ENCODE measurements at regions of chr7 and their contacts with region 1.

Region 1: GRCh38 chr7:75878769-75879611 is at the start of gene RHBDD2:
- DNase-seq: peak; percentile 90
- H3K4me3 Mint-ChIP-seq: peak within 1 kb of the TSS; percentile 95
- H3K27ac Mint-ChIP-seq: peak within 1 kb of the TSS; percentile 96
- H3K4me1 Mint-ChIP-seq: peaks cover 45% of the 10 kb centered on the region
- H3K27me3 Mint-ChIP-seq: no peaks in the 10 kb centered on the region
- total RNA-seq, gene RHBDD2: 59.9 and 63.9 TPM in 2 replicates

Region 2: GRCh38 chr7:75531359-75531821 is 347.6 kb before region 1 on chr7:
- intact Hi-C with region 1: loop called (anchors 2 kb)
- DNase-seq: no peak
- H3K4me3 Mint-ChIP-seq: no peak overlapping the region
- H3K27ac Mint-ChIP-seq: no peak overlapping the region
- H3K4me1 Mint-ChIP-seq: peaks cover 20% of the 10 kb centered on the region
- H3K27me3 Mint-ChIP-seq: peaks cover 5% of the 10 kb centered on the region

Region 3: DNA sequence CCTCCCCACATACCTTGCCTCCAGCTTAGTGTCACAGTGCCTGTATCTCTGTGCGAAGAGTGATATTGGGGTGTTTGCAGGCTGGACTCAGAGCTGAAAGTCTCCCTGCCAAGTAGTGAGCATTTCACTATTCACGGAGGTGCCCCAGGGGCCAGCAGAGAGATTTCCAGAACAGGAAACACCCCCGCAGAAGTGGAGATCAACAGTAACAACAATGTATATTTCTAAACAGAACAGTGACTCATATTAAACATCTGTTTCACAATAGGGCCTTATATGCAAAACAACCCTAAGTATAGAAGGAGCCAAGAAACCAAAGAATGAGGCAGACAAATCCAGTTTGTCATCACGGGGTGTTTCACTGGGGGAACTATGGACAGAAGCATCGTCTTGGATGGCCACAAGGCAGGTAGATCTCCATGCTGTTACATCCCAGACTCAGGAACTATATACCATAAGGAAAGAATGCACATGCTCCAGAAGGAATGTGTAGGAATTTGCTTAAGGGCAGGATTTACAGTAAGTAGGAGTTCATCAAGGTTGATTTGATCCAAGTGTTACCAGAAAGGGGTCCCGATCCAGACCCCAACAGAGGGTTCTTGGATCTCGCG is 36.0 kb before region 1 on chr7:
- intact Hi-C with region 1: loop called (anchors 1 kb)
- DNase-seq: peak; percentile 1
- H3K4me3 Mint-ChIP-seq: peak overlapping the region; percentile 76
- H3K27ac Mint-ChIP-seq: peak overlapping the region; percentile 92
- H3K4me1 Mint-ChIP-seq: peaks cover 17% of the 10 kb centered on the region
- H3K27me3 Mint-ChIP-seq: no peaks in the 10 kb centered on the region

Region 4: DNA sequence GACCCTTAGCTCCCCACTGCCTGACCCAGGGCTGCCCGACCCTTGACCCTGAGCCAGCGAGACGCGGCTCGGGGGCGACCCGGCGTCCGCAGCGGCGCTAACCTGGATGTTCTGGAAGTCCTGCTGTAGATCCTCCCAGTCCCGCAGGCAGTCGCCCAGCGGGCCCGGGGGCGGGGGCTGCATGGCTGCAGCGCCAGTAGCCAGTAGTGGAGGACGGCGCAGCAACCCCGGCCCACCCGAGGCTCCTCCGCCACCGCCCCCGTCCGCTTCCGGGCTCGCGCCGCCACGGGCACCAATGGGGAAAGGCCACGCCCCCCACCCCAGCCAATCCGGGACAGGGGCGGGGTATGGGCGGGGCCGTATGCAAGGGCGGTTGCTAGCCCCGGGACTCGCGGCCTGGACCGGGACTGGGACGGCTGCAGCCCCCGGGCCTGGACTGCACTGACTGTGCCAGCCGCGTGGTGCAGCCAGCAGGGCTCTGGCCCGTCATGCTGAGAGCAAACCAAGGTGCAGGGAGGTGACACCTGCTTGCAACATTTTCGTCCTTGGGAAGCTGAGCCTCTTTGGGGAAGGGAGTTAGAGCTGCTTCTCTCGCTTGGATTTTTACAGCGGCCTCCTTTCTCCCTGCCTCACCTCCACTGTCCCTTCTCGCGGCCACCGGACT is 115.5 kb after region 1 on chr7 and contains the start of gene TMEM120A:
- intact Hi-C with region 1: loop called (anchors 1 kb)
- DNase-seq: peak; percentile 93
- H3K4me3 Mint-ChIP-seq: peak within 1 kb of the TSS; percentile 84
- H3K27ac Mint-ChIP-seq: peak within 1 kb of the TSS; percentile 18
- H3K4me1 Mint-ChIP-seq: peaks cover 25% of the 10 kb centered on the region
- H3K27me3 Mint-ChIP-seq: no peaks in the 10 kb centered on the region
- total RNA-seq, gene TMEM120A: 44.3 and 49.9 TPM in 2 replicates

Region 5: GRCh38 chr7:76047811-76048667 is 169.0 kb after region 1 on chr7 and contains the starts of genes MDH2 and STYXL1:
- intact Hi-C with region 1: loop called (anchors 1 kb)
- DNase-seq: peak; percentile 90
- H3K4me3 Mint-ChIP-seq: peak within 1 kb of the TSS; percentile 99
- H3K27ac Mint-ChIP-seq: peak within 1 kb of the TSS; percentile 97
- H3K4me1 Mint-ChIP-seq: peaks cover 53% of the 10 kb centered on the region
- H3K27me3 Mint-ChIP-seq: no peaks in the 10 kb centered on the region
- total RNA-seq, gene MDH2: 249 and 292 TPM in 2 replicates
- total RNA-seq, gene STYXL1: 35.3 and 38.7 TPM in 2 replicates

Region 6: GRCh38 chr7:76086070-76086469 is 207.1 kb after region 1 on chr7:
- intact Hi-C with region 1: no loop called
- DNase-seq: no peak
- H3K4me3 Mint-ChIP-seq: no peak overlapping the region
- H3K27ac Mint-ChIP-seq: no peak overlapping the region
- H3K4me1 Mint-ChIP-seq: no peaks in the 10 kb centered on the region
- H3K27me3 Mint-ChIP-seq: peaks cover 3% of the 10 kb centered on the region

Region 7: GRCh38 chr7:76314042-76314721 is 435.2 kb after region 1 on chr7:
- intact Hi-C with region 1: loop called (anchors 10 kb)
- DNase-seq: peak; percentile 92
- H3K4me3 Mint-ChIP-seq: no peak overlapping the region
- H3K27ac Mint-ChIP-seq: peak overlapping the region; percentile 55
- H3K4me1 Mint-ChIP-seq: peaks cover 24% of the 10 kb centered on the region
- H3K27me3 Mint-ChIP-seq: no peaks in the 10 kb centered on the region

Measured in activated T-helper 1 cell treated with anti-CD3 and anti-CD28 coated beads, Interleukin-12 subunit alpha, Interleukin-12 subunit beta, Interleukin-2, Interleukin-4 antibody, amounts not matched to agents 30 ng/mL and 10 ng/mL and 1 ng/mL, durations not matched to agents 14 hours and 24 hours and 36 hours (primary cell).